ENCODE measurements at regions of chr17 and their contacts with region 1.

Region 1: GRCh38 chr17:63827002-63827771 is at the starts of genes FTSJ3 and PSMC5:
- DNase-seq: peak; percentile 78 to 97
- H3K4me3 ChIP-seq: peak within 1 kb of the TSS; percentile 66 to 90
- H3K27ac ChIP-seq: peak within 1 kb of the TSS; percentile 89 to 90
- H3K4me1 ChIP-seq: peaks cover 10 to 22% of the 10 kb centered on the region in 2 donors
- H3K27me3 ChIP-seq: no peaks in the 10 kb centered on the region
- CTCF ChIP-seq: peak; percentile 25 to 52 (median 40)
- total RNA-seq, gene FTSJ3: 18.2 TPM
- total RNA-seq, gene PSMC5: 83.7 TPM

Region 2: GRCh38 chr17:63549946-63550807 is 277.0 kb before region 1 on chr17 and contains the start of gene DCAF7:
- intact Hi-C with region 1: loop called (anchors 5 kb)
- DNase-seq: peak; percentile 97 to 100
- H3K4me3 ChIP-seq: peak within 1 kb of the TSS; percentile 55 to 83
- H3K27ac ChIP-seq: peak within 1 kb of the TSS; percentile 77 to 90
- H3K4me1 ChIP-seq: peaks cover 0 to 15% of the 10 kb centered on the region in 2 donors
- H3K27me3 ChIP-seq: no peaks in the 10 kb centered on the region
- CTCF ChIP-seq: no peak
- total RNA-seq, gene DCAF7: 18.6 TPM

Region 3: GRCh38 chr17:63714547-63715277 is 112.5 kb before region 1 on chr17:
- intact Hi-C with region 1: no loop called
- DNase-seq: peak in 1 of 2 donors; percentile 50
- H3K4me3 ChIP-seq: no peak overlapping the region
- H3K27ac ChIP-seq: no peak overlapping the region
- H3K4me1 ChIP-seq: no peaks in the 10 kb centered on the region
- H3K27me3 ChIP-seq: no peaks in the 10 kb centered on the region
- CTCF ChIP-seq: no peak

Region 4: GRCh38 chr17:63741221-63742049 is 85.8 kb before region 1 on chr17 and contains the start of gene STRADA:
- intact Hi-C with region 1: loop called (anchors 2 kb)
- DNase-seq: peak; percentile 94 to 99
- H3K4me3 ChIP-seq: peak within 1 kb of the TSS; percentile 84 to 90
- H3K27ac ChIP-seq: peak within 1 kb of the TSS; percentile 91 to 94
- H3K4me1 ChIP-seq: peaks cover 0 to 10% of the 10 kb centered on the region in 2 donors
- H3K27me3 ChIP-seq: no peaks in the 10 kb centered on the region
- CTCF ChIP-seq: no peak
- total RNA-seq, gene STRADA: 3.2 TPM

Region 5: GRCh38 chr17:63842540-63843386 is 15.6 kb after region 1 on chr17 and contains the start of gene SMARCD2:
- intact Hi-C with region 1: loop called (anchors 1 kb)
- DNase-seq: peak; percentile 92 to 99
- H3K4me3 ChIP-seq: peak within 1 kb of the TSS; percentile 83 to 98
- H3K27ac ChIP-seq: peak within 1 kb of the TSS; percentile 89 to 97
- H3K4me1 ChIP-seq: peaks cover 28 to 45% of the 10 kb centered on the region in 2 donors
- H3K27me3 ChIP-seq: no peaks in the 10 kb centered on the region
- CTCF ChIP-seq: peak in 1 of 3 experiments; percentile 9
- total RNA-seq, gene SMARCD2: 78.0 TPM

Region 6: GRCh38 chr17:64506576-64507477 is 679.6 kb after region 1 on chr17 and contains the start of gene CEP95:
- intact Hi-C with region 1: loop called (anchors 5 kb)
- DNase-seq: peak; percentile 76 to 98
- H3K4me3 ChIP-seq: peak within 1 kb of the TSS; percentile 91 to 99
- H3K27ac ChIP-seq: peak within 1 kb of the TSS; percentile 99 to 100
- H3K4me1 ChIP-seq: peaks cover 10 to 41% of the 10 kb centered on the region in 2 donors
- H3K27me3 ChIP-seq: no peaks in the 10 kb centered on the region
- CTCF ChIP-seq: peak in 1 of 3 experiments; percentile 47
- total RNA-seq, gene CEP95: 6.9 TPM